ENCODE measurements at regions of chr10 and their contacts with region 1.

Region 1: DNA sequence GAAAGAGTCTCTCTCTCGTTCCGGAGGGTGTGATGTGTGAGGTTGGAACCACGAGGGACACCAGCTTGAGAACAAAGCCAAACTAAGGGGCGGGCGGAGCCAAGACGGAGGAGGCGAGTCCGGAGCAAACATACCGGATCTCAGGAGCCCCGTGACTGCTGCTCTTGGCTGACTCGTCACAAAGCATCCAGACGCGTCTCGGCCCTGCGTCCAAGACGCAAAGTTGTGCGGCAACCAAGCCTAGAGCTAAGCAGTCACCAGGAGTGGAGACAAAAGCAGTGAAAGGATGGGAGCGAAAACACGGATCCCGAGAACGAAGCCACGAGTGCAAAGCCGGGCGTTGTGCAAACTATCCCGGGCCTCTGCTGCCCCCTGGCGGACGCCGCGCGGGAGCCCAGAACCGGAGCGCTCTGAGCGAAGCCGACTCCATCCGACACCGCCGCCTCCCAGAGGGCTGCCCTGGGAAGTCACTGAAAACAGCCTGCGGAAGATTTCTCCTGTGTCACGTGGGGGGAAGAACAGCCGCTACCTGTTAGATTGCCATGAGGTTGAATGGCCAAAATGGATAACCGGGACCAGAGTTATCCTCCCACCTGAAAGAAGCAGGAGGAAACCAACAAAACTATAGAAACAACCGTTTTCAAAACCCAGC is 46.4 kb upstream of the TMEM72 start:
- DNase-seq: peak; percentile 92
- ATAC-seq: peak; percentile 95 to 97

Region 2: DNA sequence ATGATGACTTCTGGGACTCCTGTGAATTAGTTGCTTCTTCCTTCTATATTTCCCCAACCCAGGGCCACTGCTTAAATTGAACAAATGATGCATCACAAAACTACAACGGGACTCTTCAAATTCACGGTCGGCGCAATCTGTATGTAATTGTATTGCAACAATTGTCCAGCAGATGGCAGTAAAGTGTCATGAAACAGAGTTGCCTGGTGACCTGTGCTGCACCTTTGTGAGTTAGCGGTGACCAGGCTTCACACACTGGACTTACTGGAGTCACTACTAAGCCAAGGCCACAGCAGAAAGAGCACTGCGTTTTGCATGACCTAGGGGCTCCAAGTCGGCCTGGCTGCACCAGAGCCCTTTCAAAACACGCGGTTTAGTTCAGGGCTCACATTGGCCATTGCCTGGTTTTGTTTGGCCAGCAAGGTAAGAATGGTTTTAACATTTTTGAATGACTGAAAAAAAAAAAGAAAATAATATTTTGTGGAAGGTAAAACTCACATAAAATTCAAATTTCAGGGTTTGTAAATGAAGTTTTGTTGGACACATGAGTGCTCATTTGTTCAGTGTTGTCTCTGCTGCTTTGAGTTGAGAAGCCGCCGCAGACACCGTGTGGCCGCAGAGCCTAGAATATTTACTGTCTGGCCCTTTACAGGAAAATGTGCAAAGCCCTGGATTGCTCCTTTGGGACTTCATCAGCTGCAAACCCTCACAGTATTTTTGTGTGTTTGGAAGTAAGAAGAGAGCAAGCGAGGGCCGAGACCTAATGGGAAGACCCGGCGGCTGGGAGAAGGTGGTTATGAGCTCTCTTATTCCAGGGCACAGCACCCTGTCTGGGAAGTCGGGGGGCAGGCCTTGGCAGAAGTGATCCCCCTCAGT is 1192.9 kb before region 1 on chr10:
- intact Hi-C with region 1: loop called (anchors 1 to 5 kb)
- DNase-seq: no peak
- ATAC-seq: peak; percentile 70 to 74

Region 3: GRCh38 chr10:44300666-44301649 is 563.8 kb before region 1 on chr10:
- intact Hi-C with region 1: loop called in 1 of 2 experiments (anchors 10 kb)
- DNase-seq: peak; percentile 52
- ATAC-seq: peak; percentile 59 to 91

Region 4: GRCh38 chr10:44752451-44753441 is 112.0 kb before region 1 on chr10:
- intact Hi-C with region 1: no loop called
- DNase-seq: no peak
- ATAC-seq: peak in 1 of 2 donors; percentile 55